CD4-positive, alpha-beta T cell (primary cell): ENCODE measurements at regions of chr4 and their contacts with region 1.

Region 1: GRCh38 chr4:121696581-121697461 is at the start of gene ANXA5:
- DNase-seq: peak; percentile 26 to 87 (median 62)
- ATAC-seq: peak; percentile 82
- H3K4me3 ChIP-seq: peak within 1 kb of the TSS; percentile 92
- H3K4me3 Mint-ChIP-seq: peak within 1 kb of the TSS; percentile 99
- H3K27ac ChIP-seq: peak within 1 kb of the TSS in 1 of 2 donors; percentile 66
- H3K27ac Mint-ChIP-seq: peak within 1 kb of the TSS; percentile 95
- H3K4me1 ChIP-seq: peaks cover 19% of the 10 kb centered on the region
- H3K4me1 Mint-ChIP-seq: peaks cover 40% of the 10 kb centered on the region
- H3K27me3 ChIP-seq: no peaks in the 10 kb centered on the region
- H3K27me3 Mint-ChIP-seq: no peaks in the 10 kb centered on the region
- CTCF ChIP-seq: no peak
- total RNA-seq, gene ANXA5: 50.8 to 55.9 TPM

Region 2: GRCh38 chr4:121800961-121801714 is 104.3 kb after region 1 on chr4 and contains the start of gene EXOSC9:
- CTCF ChIA-PET with region 1: no interaction called
- POLR2A ChIA-PET with region 1: interaction called, 21 read pairs
- intact Hi-C with region 1: loop called in 1 of 2 experiments (anchors 5 kb)
- DNase-seq: peak; percentile 88 to 97 (median 94)
- ATAC-seq: peak; percentile 87
- H3K4me3 ChIP-seq: peak within 1 kb of the TSS; percentile 95
- H3K4me3 Mint-ChIP-seq: peak within 1 kb of the TSS; percentile 96
- H3K27ac ChIP-seq: peak within 1 kb of the TSS; percentile 80 to 96
- H3K27ac Mint-ChIP-seq: peak within 1 kb of the TSS; percentile 100
- H3K4me1 ChIP-seq: peaks cover 13% of the 10 kb centered on the region
- H3K4me1 Mint-ChIP-seq: peaks cover 51% of the 10 kb centered on the region
- H3K27me3 ChIP-seq: no peaks in the 10 kb centered on the region
- H3K27me3 Mint-ChIP-seq: no peaks in the 10 kb centered on the region
- CTCF ChIP-seq: no peak
- total RNA-seq, gene EXOSC9: 71.6 to 72.7 TPM